Naive thymus-derived CD8-positive, alpha-beta T cell (primary cell): ENCODE measurements at regions of chr1 and their contacts with region 1.

Region 1: GRCh38 chr1:44786138-44786840 is 1.7 kb downstream of the BEST4 start:
- DNase-seq: peak; percentile 64 to 91 (median 79)
- ATAC-seq: peak; percentile 75 to 77
- H3K4me3 Mint-ChIP-seq: peak overlapping the region; percentile 69 to 84 (median 80)
- H3K27ac Mint-ChIP-seq: peak overlapping the region; percentile 35 to 95 (median 88)
- H3K4me1 Mint-ChIP-seq: peaks cover 16 to 34% (median 30%) of the 10 kb centered on the region in 4 donors
- H3K27me3 Mint-ChIP-seq: no peaks in the 10 kb centered on the region

Region 2: GRCh38 chr1:44807262-44808062 is 21.2 kb after region 1 on chr1 and contains the start of gene DYNLT4:
- POLR2A ChIA-PET with region 1: interaction called, 52 read pairs
- DNase-seq: peak; percentile 72 to 96 (median 90)
- ATAC-seq: peak; percentile 56 to 69
- H3K4me3 Mint-ChIP-seq: peak within 1 kb of the TSS; percentile 40 to 91 (median 78)
- H3K27ac Mint-ChIP-seq: peak within 1 kb of the TSS; percentile 98 to 100 (median 99)
- H3K4me1 Mint-ChIP-seq: peaks cover 42 to 87% (median 81%) of the 10 kb centered on the region in 4 donors
- H3K27me3 Mint-ChIP-seq: no peaks in the 10 kb centered on the region
- polyA plus RNA-seq, gene DYNLT4: 0.24 to 0.86 TPM in 2 of 3 donors, not detected in the other

Region 3: DNA sequence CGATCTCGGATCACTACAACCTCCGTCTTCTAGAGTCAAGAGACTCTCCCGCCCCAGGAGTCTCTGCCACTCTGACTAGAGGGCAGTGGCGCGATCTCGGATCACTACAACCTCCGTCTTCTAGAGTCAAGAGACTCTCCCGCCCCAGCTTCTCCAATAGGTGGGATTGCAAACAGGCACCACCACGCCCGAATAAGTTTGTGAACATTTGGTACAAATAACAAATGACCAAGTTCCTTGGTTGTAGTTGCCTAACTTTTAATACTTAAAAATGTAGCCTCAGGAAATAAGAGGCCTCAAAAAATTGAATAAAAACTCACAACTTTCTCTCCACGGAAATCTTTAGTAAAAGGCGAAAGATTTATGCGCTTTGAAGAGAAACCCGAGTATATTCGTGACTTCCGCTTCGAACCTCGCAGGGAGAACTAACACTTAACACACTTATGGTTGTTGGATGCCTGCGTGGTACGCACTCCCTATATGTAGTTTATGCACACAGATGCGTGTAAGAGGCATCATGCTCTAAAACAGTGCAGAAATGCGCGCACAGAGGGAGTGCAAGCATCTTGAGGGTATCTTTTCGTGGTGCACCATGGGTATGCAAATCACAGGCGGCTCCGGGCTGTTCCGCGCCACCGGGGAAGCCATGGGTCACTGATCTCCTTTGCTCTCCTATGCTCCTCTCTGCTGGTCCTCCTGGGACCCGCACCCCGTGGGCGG is 33.5 kb after region 1 on chr1:
- POLR2A ChIA-PET with region 1: interaction called, 100 read pairs
- DNase-seq: peak; percentile 61 to 98 (median 80)
- ATAC-seq: peak; percentile 78 to 79
- H3K4me3 Mint-ChIP-seq: peak overlapping the region; percentile 92 to 97 (median 94)
- H3K27ac Mint-ChIP-seq: peak overlapping the region; percentile 100
- H3K4me1 Mint-ChIP-seq: peaks cover 23 to 55% (median 42%) of the 10 kb centered on the region in 4 donors
- H3K27me3 Mint-ChIP-seq: no peaks in the 10 kb centered on the region